ENCODE measurements at regions of chr13 and their contacts with region 1.

Region 1: DNA sequence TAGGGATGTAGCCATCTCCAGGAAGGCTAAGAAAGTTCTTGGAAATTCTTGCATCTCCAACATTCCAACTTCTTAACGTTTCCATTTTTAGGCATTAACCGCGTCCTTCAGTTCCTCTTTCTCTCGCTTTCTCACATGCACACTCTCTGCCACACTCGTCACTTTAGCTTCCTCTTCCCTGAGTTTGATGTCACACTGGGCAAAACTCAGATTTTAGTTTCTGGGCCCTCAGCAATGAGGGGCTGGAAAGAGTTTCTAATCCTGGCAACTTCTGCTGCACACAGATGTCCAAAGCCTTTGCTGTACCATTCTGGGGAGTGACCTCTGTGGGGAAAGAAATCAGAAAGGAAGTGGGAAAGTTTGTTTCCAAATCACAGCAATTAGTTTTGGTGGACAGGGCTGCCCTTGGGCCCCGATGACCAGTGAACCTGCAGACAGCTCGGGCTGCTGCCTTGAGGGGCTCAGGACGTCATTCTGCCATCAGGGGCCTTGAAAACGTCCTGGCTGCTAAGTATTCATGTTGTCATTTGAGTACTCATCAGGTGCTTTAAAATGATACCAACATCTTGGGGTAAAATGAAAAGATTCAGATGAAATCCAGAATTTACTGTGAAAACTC is 89.3 kb downstream of the KL start:
- DNase-seq: no peak
- ATAC-seq: peak; percentile 19
- H3K4me3 ChIP-seq: no peak overlapping the region
- H3K27ac ChIP-seq: peak overlapping the region; percentile 63
- H3K4me1 ChIP-seq: peaks cover 49% of the 10 kb centered on the region
- H3K27me3 ChIP-seq: no peaks in the 10 kb centered on the region
- CTCF ChIP-seq: no peak
- EP300 ChIP-seq: no peak
- POLR2A ChIP-seq: no peak
- RAD21 ChIP-seq: no peak

Region 2: GRCh38 chr13:32960626-32961025 is 144.9 kb before region 1 on chr13:
- CTCF ChIA-PET with region 1: no interaction called
- POLR2A ChIA-PET with region 1: no interaction called
- RAD21 ChIA-PET with region 1: no interaction called
- SMC1A ChIA-PET with region 1: no interaction called
- in situ Hi-C with region 1: no loop called
- intact Hi-C with region 1: no loop called
- DNase-seq: no peak
- ATAC-seq: no peak
- H3K4me3 ChIP-seq: no peak overlapping the region
- H3K27ac ChIP-seq: no peak overlapping the region
- H3K4me1 ChIP-seq: no peaks in the 10 kb centered on the region
- H3K27me3 ChIP-seq: no peaks in the 10 kb centered on the region; a peak in 1 of 4 replicates
- CTCF ChIP-seq: no peak
- EP300 ChIP-seq: no peak
- POLR2A ChIP-seq: no peak
- RAD21 ChIP-seq: no peak

Region 3: DNA sequence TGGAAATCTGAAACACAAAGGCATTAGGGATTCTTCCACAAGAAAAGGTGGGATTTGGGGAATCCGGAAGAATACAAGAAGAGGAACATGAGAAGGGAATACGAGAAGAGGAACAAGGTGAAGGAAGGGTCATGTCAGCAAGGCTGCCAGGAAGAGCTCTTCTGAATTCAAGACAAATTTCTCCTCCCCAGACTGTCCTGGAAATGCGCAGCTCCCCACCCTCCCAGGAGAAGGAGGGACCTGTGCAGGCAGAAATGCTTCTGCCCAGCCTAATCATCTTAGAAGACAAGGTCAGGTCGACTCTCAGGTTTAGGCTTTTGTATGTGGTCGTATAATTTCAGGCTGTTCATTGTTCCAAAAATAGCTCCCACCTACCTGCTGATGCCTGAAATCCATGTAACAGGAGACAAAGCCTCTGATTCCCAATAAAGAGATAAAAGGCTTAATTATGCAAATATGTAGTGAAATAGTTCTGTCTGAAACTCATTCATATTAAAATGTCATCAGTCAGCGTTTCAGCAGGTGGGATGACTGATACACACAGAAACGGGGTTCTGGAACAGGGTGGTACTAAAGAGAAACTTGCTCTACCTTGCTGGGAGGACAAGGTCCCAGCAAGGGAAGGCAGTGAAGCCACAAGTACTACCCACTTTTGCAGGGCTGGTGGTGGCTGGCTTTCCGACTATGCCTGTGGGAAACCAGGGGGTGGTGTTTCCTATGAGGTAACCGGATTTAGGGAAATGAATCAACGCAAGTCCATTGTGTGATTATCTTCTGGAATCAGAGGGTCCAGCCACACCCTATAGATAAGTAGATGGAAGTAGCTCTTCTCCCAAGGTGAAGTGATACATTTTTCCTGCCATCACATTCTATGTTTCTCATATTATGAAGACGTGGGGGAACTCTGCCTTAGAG is 13.2 kb before region 1 on chr13:
- CTCF ChIA-PET with region 1: interaction called, 11 read pairs
- POLR2A ChIA-PET with region 1: no interaction called
- RAD21 ChIA-PET with region 1: interaction called, 4 read pairs
- SMC1A ChIA-PET with region 1: interaction called, 13 read pairs
- in situ Hi-C with region 1: no loop called
- intact Hi-C with region 1: no loop called
- DNase-seq: no peak
- ATAC-seq: no peak
- H3K4me3 ChIP-seq: no peak overlapping the region
- H3K27ac ChIP-seq: no peak overlapping the region
- H3K4me1 ChIP-seq: no peaks in the 10 kb centered on the region
- H3K27me3 ChIP-seq: no peaks in the 10 kb centered on the region
- CTCF ChIP-seq: no peak
- EP300 ChIP-seq: no peak
- POLR2A ChIP-seq: no peak
- RAD21 ChIP-seq: no peak